Endothelial cell of umbilical vein (primary cell): ENCODE measurements at regions of chr7 and their contacts with region 1.

Region 1: GRCh38 chr7:80918909-80919662 is at the start of gene SEMA3C:
- DNase-seq: peak; percentile 90
- H3K4me3 ChIP-seq: peak within 1 kb of the TSS; percentile 10 to 69 (median 14)
- H3K27ac ChIP-seq: no peak within 1 kb of the TSS
- H3K4me1 ChIP-seq: peaks cover 10% of the 10 kb centered on the region
- H3K27me3 ChIP-seq: peaks cover 57 to 85% of the 10 kb centered on the region in 2 experiments
- CTCF ChIP-seq: no peak
- POLR2A ChIP-seq: no peak
- total RNA-seq, gene SEMA3C: 0.09 and 0.18 TPM in 2 replicates

Region 2: DNA sequence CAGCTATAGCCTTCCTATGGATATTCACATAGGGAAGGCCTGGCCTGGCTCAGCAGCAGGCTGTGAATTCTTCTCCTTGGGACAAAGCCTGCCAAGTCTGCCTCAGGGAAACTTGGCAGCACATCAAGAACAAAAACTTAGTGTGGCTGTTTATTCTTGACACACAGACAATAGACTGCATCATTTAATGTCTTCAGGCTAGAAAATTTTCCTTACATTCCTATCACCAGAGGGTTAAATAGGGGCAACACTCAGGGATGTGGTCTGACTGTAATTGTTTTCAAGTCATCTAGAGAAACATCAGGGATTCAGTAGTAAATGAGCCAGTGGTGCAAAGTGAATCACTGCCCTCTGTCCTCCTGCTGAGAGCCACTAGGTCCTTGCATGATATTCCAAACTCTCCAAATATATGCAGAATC is 137.5 kb before region 1 on chr7:
- CTCF ChIA-PET with region 1: no interaction called
- POLR2A ChIA-PET with region 1: no interaction called
- dilution Hi-C with region 1: no loop called
- intact Hi-C with region 1: no loop called
- DNase-seq: peak; percentile 74
- H3K4me3 ChIP-seq: no peak overlapping the region
- H3K27ac ChIP-seq: no peak overlapping the region
- H3K4me1 ChIP-seq: no peaks in the 10 kb centered on the region
- H3K27me3 ChIP-seq: no peaks in the 10 kb centered on the region
- CTCF ChIP-seq: no peak
- POLR2A ChIP-seq: no peak

Region 3: DNA sequence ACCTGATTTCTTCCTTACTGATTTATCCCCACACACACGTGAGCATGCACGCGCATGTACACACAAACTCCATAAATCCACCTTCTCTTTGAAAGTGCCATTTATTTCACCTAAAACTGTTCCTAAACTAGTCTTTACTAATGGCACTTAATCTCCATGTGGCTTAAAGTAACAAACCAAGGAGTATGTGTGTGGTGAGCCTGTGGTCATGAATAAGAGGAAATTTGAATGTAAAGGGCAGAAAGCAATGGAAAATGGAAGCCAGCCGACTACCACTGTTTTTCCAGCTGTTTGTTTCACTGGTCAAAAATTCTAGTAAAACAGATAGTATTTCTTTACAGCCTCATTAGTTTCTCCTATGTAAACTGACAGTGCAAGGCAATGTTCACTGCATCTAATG is 24.0 kb before region 1 on chr7:
- CTCF ChIA-PET with region 1: no interaction called
- POLR2A ChIA-PET with region 1: no interaction called
- dilution Hi-C with region 1: no loop called
- intact Hi-C with region 1: no loop called
- DNase-seq: no peak
- H3K4me3 ChIP-seq: no peak overlapping the region
- H3K27ac ChIP-seq: no peak overlapping the region
- H3K4me1 ChIP-seq: no peaks in the 10 kb centered on the region
- H3K27me3 ChIP-seq: no peaks in the 10 kb centered on the region
- CTCF ChIP-seq: no peak
- POLR2A ChIP-seq: no peak

Region 4: GRCh38 chr7:80941208-80941758 is 22.2 kb after region 1 on chr7:
- CTCF ChIA-PET with region 1: interaction called, 6 read pairs
- POLR2A ChIA-PET with region 1: no interaction called
- dilution Hi-C with region 1: no loop called
- intact Hi-C with region 1: loop called (anchors 1 kb)
- DNase-seq: no peak
- H3K4me3 ChIP-seq: no peak overlapping the region
- H3K27ac ChIP-seq: peak overlapping the region; percentile 10
- H3K4me1 ChIP-seq: peaks cover 28% of the 10 kb centered on the region
- H3K27me3 ChIP-seq: no peaks in the 10 kb centered on the region
- CTCF ChIP-seq: no peak
- POLR2A ChIP-seq: no peak

Region 5: DNA sequence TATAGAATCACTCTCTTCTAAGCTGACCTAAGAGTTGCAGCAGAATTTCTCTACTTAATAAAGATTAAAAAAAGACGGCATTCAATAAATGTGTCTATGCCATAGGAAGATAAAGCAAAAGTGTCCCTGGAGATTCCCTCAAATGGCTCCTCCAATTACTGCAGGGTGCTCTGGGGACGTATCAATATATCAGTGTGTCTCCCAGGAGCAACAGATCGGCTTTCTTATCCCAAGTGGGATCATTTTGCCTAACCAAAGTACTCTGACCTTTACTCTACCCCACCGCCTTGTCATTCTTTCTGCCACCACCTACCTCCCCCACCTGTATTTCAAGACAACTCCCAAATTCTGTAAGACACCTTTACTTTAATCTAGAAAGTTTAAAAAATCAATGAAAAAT is 201.7 kb after region 1 on chr7:
- CTCF ChIA-PET with region 1: no interaction called
- POLR2A ChIA-PET with region 1: no interaction called
- dilution Hi-C with region 1: no loop called
- intact Hi-C with region 1: no loop called
- DNase-seq: no peak
- H3K4me3 ChIP-seq: no peak overlapping the region
- H3K27ac ChIP-seq: no peak overlapping the region
- H3K4me1 ChIP-seq: no peaks in the 10 kb centered on the region
- H3K27me3 ChIP-seq: peaks cover 0 to 2% of the 10 kb centered on the region in 2 experiments
- CTCF ChIP-seq: no peak
- POLR2A ChIP-seq: no peak

Region 6: DNA sequence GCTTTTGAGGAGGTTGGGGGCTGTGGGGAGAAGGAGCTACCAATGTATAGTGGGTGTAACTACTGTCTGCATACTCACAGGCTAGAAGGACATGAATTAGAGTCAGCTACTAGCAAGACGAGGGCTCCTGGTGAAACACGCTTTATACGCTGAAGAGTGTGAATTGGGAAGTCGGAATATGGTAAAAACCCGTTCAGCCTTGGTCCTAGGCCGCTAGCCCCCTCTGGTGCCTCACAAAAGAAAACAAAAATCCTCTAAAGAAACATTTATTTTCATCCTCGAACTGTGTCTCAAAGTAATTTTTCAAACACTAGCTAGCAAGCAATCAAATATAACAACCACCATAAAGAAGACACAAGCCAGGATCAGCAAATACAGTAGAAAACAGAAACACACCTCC is 337.9 kb after region 1 on chr7:
- CTCF ChIA-PET with region 1: interaction called, 5 read pairs
- POLR2A ChIA-PET with region 1: no interaction called
- dilution Hi-C with region 1: no loop called
- intact Hi-C with region 1: loop called (anchors 5 kb)
- DNase-seq: no peak
- H3K4me3 ChIP-seq: no peak overlapping the region
- H3K27ac ChIP-seq: no peak overlapping the region
- H3K4me1 ChIP-seq: no peaks in the 10 kb centered on the region
- H3K27me3 ChIP-seq: peaks cover 0 to 8% of the 10 kb centered on the region in 2 experiments
- CTCF ChIP-seq: no peak
- POLR2A ChIP-seq: no peak

Region 7: DNA sequence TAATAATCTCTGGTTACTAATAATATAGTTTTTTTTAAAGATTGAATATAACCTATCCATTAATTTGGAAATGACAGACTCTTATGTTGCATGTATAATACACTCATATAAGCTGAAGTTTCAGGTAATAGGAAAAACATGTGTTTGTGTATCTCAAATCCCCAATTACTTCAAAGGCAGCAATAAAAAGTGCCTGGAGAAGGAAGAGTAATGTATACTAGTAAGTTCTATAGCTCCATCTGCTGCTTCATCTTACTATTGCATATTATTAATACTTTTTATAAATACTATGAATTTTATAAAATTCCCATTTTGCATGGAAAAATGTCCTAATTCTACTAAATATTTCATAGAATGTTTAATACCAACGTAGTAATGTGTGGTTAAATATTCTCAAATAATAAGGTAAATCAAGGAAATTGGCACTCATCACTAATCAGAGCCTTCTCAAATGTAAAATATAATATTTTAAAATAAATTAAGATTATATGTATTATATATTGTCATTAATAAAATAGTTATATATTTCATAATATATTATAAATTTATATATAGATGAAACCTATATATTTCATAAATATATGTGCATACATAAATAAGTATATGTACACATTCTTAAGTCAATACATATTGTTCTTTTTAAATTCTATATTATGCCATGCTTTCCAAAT is 538.9 kb after region 1 on chr7:
- CTCF ChIA-PET with region 1: interaction called, 67 read pairs
- POLR2A ChIA-PET with region 1: no interaction called
- dilution Hi-C with region 1: no loop called
- intact Hi-C with region 1: no loop called
- DNase-seq: peak; percentile 10
- H3K4me3 ChIP-seq: no peak overlapping the region
- H3K27ac ChIP-seq: no peak overlapping the region
- H3K4me1 ChIP-seq: no peaks in the 10 kb centered on the region
- H3K27me3 ChIP-seq: peaks cover 8 to 13% of the 10 kb centered on the region in 2 experiments
- CTCF ChIP-seq: peak; percentile 12 to 20
- POLR2A ChIP-seq: no peak

Region 8: DNA sequence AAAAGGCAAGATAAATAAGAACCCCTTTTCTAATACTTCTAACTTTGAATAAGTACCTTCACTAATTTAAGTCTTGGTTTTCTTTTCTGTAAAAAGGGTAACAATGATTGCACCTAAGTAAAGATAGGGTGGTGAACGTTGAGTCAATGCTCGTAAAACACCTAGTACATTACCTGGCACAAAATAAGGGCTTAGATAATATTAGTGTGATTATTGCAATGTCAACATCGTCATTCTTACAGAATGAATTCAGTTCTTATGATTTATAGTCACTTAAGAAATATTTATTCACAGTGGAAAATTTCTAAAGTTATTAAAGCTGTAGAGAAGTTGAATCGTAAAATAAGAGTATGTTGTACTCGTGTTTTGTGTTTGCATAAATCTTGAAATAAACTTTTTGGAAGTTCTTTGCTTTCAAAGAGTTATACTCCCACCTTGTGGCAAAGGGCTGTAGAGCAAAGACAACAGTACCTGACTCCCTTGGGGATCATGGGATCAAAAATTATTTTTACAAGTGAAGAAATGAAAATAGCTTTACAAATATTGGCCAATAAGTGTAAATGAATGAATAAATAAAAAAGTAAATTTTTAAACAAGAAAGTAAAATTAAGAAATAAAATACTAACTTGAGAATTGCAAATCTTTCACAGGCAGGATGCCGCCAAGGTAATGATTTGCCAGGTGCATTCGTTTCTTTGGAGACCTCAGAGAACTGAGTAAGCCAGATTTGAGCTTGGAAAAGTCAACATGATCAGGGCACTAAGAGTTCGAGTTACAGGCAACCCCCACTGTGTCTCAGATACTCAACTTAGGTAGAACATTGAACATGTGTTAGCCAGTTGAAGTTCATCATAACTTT is 1810.3 kb after region 1 on chr7:
- CTCF ChIA-PET with region 1: no interaction called
- POLR2A ChIA-PET with region 1: no interaction called
- dilution Hi-C with region 1: no loop called
- intact Hi-C with region 1: loop called (anchors 10 kb)
- DNase-seq: peak; percentile 60
- H3K4me3 ChIP-seq: no peak overlapping the region
- H3K27ac ChIP-seq: no peak overlapping the region
- H3K4me1 ChIP-seq: no peaks in the 10 kb centered on the region
- H3K27me3 ChIP-seq: no peaks in the 10 kb centered on the region
- CTCF ChIP-seq: peak; percentile 48 to 62
- POLR2A ChIP-seq: no peak